ENCODE measurements at regions of chr2 and their contacts with region 1.

Region 1: GRCh38 chr2:203706403-203706802 is at the start of gene CD28:
- DNase-seq: peak; percentile 98
- H3K4me3 ChIP-seq: peak within 1 kb of the TSS; percentile 71
- H3K27ac ChIP-seq: peak within 1 kb of the TSS; percentile 83
- H3K4me1 ChIP-seq: peaks cover 70% of the 10 kb centered on the region
- CTCF ChIP-seq: no peak
- total RNA-seq, gene CD28: 0.49 and 0.92 TPM in 2 replicates

Region 2: GRCh38 chr2:203583701-203584100 is 122.7 kb before region 1 on chr2:
- CTCF ChIA-PET with region 1: no interaction called
- POLR2A ChIA-PET with region 1: interaction called, 8 read pairs
- intact Hi-C with region 1: loop called (anchors 1 kb)
- DNase-seq: peak; percentile 81
- H3K4me3 ChIP-seq: peak overlapping the region; percentile 51
- H3K27ac ChIP-seq: peak overlapping the region; percentile 92
- H3K4me1 ChIP-seq: peaks cover 78% of the 10 kb centered on the region
- CTCF ChIP-seq: no peak

Region 3: GRCh38 chr2:203650860-203651613 is 55.4 kb before region 1 on chr2:
- CTCF ChIA-PET with region 1: interaction called, 3 read pairs
- POLR2A ChIA-PET with region 1: interaction called, 8 read pairs
- intact Hi-C with region 1: loop called (anchors 2 kb)
- DNase-seq: peak; percentile 84
- H3K4me3 ChIP-seq: no peak overlapping the region
- H3K27ac ChIP-seq: peak overlapping the region; percentile 55
- H3K4me1 ChIP-seq: peaks cover 56% of the 10 kb centered on the region
- CTCF ChIP-seq: peak; percentile 89

Region 4: GRCh38 chr2:203683932-203684556 is 22.4 kb before region 1 on chr2:
- CTCF ChIA-PET with region 1: no interaction called
- POLR2A ChIA-PET with region 1: interaction called, 11 read pairs
- intact Hi-C with region 1: no loop called
- DNase-seq: no peak
- H3K4me3 ChIP-seq: no peak overlapping the region
- H3K27ac ChIP-seq: no peak overlapping the region
- H3K4me1 ChIP-seq: peaks cover 83% of the 10 kb centered on the region
- CTCF ChIP-seq: no peak

Region 5: DNA sequence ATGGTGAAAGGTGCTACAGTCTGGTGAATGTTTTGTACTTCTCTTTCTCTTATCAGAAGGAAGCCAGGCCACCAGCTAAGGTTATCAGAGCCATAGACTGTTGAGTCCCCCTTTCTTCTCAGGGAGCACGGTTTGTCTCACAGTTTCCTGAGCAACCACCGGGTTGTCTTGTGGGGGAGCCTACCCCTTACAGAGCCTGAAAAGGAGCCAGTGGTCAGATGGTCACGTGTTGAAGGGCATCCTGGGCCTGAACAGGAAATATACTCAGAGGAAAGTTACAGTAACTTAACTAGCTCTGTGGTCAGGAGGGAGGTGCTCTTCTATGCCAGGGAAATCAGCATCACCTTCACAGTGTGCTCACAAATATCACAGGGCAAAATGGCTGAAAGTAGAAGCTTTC is 11.7 kb after region 1 on chr2:
- CTCF ChIA-PET with region 1: interaction called, 3 read pairs
- POLR2A ChIA-PET with region 1: interaction called, 62 read pairs
- intact Hi-C with region 1: no loop called
- DNase-seq: peak; percentile 53
- H3K4me3 ChIP-seq: peak overlapping the region; percentile 3
- H3K27ac ChIP-seq: peak overlapping the region; percentile 18
- H3K4me1 ChIP-seq: peaks cover 71% of the 10 kb centered on the region
- CTCF ChIP-seq: no peak

Region 6: DNA sequence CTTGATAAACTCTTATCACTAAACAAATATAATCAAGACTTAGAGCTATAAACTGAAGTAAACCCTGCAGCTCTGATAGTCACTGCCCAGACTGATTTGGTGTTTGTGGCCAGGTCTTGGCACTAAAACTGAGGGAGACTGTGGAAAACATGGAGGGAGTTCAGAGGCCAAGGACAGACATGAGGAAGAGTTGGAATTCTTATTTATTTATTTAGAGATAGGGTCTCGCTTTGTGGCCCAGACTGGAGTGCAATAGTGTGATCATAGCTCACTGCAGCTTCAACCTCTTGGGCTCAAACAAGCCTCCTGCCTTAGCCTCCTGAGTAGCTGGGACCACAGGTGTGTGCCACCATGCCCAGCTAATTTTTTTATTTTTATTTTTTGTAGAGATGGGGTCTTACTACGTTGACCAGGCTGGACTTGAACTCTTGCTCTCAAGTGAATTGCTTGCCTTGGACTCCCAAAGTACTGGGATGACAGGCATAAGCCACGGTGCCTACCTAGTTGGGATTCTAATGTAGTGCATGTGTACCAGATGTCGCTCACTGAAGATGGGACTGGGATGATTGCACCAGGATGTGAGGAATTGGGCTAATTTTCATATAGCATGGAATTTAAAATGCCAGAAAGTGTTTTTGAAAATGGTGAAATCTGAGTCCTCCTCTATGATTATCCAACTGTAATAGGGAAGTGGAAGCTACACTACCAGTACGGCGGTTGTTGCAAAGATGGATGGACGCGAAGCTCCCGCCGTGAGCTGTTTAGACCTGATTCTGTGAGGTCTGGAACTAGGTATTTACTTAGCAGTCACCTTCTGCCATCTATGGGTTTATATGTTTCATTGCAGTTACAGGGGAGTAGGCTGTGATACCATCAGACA is 108.5 kb after region 1 on chr2:
- CTCF ChIA-PET with region 1: interaction called, 3 read pairs
- POLR2A ChIA-PET with region 1: interaction called, 5 read pairs
- intact Hi-C with region 1: loop called (anchors 5 kb)
- DNase-seq: peak; percentile 89
- H3K4me3 ChIP-seq: peak overlapping the region; percentile 13
- H3K27ac ChIP-seq: no peak overlapping the region
- H3K4me1 ChIP-seq: peaks cover 35% of the 10 kb centered on the region
- CTCF ChIP-seq: peak; percentile 96